ENCODE measurements at regions of chr17 and their contacts with region 1.

Region 1: DNA sequence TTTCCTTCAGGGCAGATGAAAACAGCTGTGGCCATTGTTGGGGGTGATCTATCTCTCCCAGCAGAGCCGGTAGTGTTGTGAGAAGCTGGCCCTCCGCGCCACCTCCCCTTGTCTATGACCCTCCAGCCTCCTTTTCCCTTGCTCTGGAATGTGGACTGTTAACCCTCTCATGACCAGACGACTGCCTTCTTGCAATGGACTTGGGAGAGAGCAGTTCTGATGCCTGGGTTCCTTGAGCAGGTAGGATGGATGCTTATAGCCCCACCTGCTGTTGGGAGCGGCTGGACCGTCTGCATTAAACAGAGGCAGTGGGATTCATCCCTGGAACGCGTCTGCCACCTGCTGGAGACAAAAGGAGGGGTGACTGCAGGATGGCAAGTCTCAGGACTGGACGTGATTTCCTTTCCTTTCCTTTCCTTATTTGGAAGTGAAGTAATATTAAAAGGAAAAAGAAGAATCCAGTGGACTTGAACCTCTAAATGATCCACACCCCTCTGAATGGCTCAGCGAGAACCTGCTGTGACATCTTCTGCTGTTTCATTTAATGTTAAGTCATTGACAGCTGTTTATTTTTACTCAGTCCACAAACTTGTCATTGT is 1.8 kb upstream of the SOST start:
- DNase-seq: peak; percentile 92
- ATAC-seq: peak; percentile 91 to 95
- H3K4me3 ChIP-seq: no peak overlapping the region
- H3K27ac ChIP-seq: no peak overlapping the region
- H3K4me1 ChIP-seq: peaks cover 11% of the 10 kb centered on the region
- H3K27me3 ChIP-seq: peaks cover 27% of the 10 kb centered on the region
- CTCF ChIP-seq: peak; percentile 98

Region 2: DNA sequence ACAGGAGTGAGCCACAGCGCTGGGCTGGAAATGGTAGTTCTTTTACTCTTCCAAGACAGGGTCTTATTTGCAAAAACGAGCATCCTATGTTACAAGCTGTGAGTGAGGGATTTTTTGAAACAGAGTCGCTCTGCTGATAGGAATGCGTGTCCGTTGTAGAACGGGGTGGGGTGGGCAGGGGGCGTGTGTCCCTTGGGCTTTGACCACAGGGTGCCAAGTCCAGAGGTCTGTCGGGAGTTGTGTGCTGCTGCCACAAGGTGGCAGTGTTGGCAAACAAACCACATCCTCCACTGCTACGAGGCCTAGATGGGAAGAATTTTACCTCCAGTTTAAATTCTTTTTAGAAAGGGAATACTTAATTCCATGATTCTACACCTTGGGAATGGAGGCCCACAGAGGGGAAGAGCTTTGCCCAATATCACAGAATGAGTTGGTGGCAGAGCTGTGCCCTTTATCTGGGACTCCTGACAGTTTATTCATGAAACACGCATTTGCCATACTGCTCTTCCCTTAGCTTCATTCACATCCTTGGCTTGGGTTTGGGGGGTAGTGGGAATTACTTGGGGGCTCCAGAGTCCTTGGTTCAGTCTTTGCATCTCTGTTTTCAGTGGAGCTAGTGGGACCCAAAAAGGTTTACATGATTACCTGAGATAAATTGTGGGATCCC is 183.7 kb before region 1 on chr17:
- intact Hi-C with region 1: loop called (anchors 10 kb)
- DNase-seq: peak; percentile 69
- ATAC-seq: peak; percentile 74 to 85
- H3K4me3 ChIP-seq: no peak overlapping the region
- H3K27ac ChIP-seq: no peak overlapping the region
- H3K4me1 ChIP-seq: peaks cover 19% of the 10 kb centered on the region
- H3K27me3 ChIP-seq: no peaks in the 10 kb centered on the region
- CTCF ChIP-seq: peak; percentile 91

Region 3: DNA sequence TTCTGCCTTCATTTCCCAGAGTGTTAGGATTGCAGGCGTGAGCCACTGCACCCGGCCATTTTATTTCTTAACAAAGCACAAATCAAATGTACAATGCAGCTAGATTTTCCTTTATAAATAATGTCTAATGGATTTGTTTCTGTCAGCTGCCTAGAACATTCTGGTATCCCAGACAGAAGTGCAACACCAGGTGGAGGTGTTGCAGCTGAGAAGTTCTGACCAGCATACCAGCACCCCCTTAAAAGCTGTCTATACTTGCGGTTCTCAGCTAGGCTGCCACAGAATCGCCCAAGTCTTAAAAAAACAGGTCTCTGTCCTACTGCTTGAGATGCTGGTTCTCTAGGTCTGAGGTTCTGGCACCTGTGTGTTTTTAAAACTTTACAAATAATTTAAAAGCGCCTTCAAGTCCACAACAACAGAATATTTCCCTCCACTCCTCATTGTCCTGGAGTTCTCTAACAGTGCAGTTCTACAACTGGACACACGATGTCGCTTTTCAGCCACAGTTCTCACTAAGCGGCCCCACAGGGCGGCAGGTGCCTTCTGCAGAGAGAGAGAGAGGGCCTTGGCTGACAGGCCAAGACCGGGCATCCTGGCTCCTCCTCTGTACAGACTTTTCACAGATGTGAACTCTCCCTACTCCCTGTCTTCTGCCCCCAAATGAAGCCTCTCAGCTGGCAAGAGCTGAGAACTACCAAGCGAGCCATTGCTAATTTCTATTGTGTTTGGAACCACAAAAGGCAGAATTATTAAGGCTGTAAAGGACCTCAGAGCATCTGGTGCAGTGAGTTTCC is 66.1 kb before region 1 on chr17:
- intact Hi-C with region 1: loop called (anchors 10 kb)
- DNase-seq: peak; percentile 80
- ATAC-seq: peak; percentile 92 to 94
- H3K4me3 ChIP-seq: no peak overlapping the region
- H3K27ac ChIP-seq: no peak overlapping the region
- H3K4me1 ChIP-seq: peaks cover 15% of the 10 kb centered on the region
- H3K27me3 ChIP-seq: peaks cover 4% of the 10 kb centered on the region
- CTCF ChIP-seq: peak; percentile 94

Region 4: GRCh38 chr17:43713494-43714162 is 46.7 kb before region 1 on chr17:
- intact Hi-C with region 1: no loop called
- DNase-seq: no peak
- ATAC-seq: peak; percentile 57 to 79
- H3K4me3 ChIP-seq: peak overlapping the region; percentile 56
- H3K27ac ChIP-seq: peak overlapping the region; percentile 72
- H3K4me1 ChIP-seq: peaks cover 15% of the 10 kb centered on the region
- H3K27me3 ChIP-seq: peaks cover 22% of the 10 kb centered on the region
- CTCF ChIP-seq: no peak

Measured in lower lobe of right lung (tissue), 2 donors.